Tibial artery (tissue), 4 donors: ENCODE measurements at regions of chr9 and their contacts with region 1.

Region 1: GRCh38 chr9:7489036-7489435 is 310.5 kb downstream of the DMAC1 start:
- DNase-seq: no peak
- H3K4me3 ChIP-seq: no peak overlapping the region
- H3K27ac ChIP-seq: no peak overlapping the region
- H3K4me1 ChIP-seq: no peaks in the 10 kb centered on the region
- H3K27me3 ChIP-seq: no peaks in the 10 kb centered on the region
- CTCF ChIP-seq: no peak

Region 2: DNA sequence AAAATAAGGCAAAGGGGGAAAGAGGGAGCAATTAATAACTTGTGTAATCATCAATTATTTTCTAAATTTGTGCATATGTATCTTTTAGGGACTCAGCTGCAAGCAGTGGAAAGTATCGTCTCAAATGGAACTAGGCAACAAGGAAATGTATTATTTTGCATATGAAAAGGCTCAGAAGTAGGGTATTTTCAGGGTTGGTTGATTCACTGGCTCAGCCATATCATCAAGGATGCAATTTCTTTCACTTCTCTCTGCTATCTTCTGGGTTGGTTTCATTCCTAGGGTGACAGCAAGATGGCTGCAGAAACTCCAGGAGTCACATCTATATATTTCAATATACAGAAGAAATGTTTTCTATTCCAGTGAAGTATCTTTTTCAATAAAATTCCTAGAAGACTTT is 199.3 kb before region 1 on chr9:
- intact Hi-C with region 1: no loop called
- DNase-seq: no peak
- H3K4me3 ChIP-seq: no peak overlapping the region
- H3K27ac ChIP-seq: no peak overlapping the region
- H3K4me1 ChIP-seq: no peaks in the 10 kb centered on the region
- H3K27me3 ChIP-seq: no peaks in the 10 kb centered on the region
- CTCF ChIP-seq: no peak

Region 3: GRCh38 chr9:7300484-7300883 is 188.6 kb before region 1 on chr9:
- intact Hi-C with region 1: no loop called
- DNase-seq: no peak
- H3K4me3 ChIP-seq: no peak overlapping the region
- H3K27ac ChIP-seq: no peak overlapping the region
- H3K4me1 ChIP-seq: peaks cover 0 to 13% (median 0%) of the 10 kb centered on the region in 4 donors
- H3K27me3 ChIP-seq: no peaks in the 10 kb centered on the region
- CTCF ChIP-seq: no peak

Region 4: GRCh38 chr9:7394007-7394774 is 94.8 kb before region 1 on chr9:
- intact Hi-C with region 1: no loop called
- DNase-seq: no peak
- H3K4me3 ChIP-seq: no peak overlapping the region
- H3K27ac ChIP-seq: no peak overlapping the region
- H3K4me1 ChIP-seq: no peaks in the 10 kb centered on the region
- H3K27me3 ChIP-seq: no peaks in the 10 kb centered on the region
- CTCF ChIP-seq: no peak

Region 5: GRCh38 chr9:7523426-7524043 is 34.5 kb after region 1 on chr9:
- intact Hi-C with region 1: no loop called
- DNase-seq: no peak
- H3K4me3 ChIP-seq: no peak overlapping the region
- H3K27ac ChIP-seq: no peak overlapping the region
- H3K4me1 ChIP-seq: peaks cover 0 to 6% (median 0%) of the 10 kb centered on the region in 4 donors
- H3K27me3 ChIP-seq: no peaks in the 10 kb centered on the region
- CTCF ChIP-seq: no peak

Region 6: DNA sequence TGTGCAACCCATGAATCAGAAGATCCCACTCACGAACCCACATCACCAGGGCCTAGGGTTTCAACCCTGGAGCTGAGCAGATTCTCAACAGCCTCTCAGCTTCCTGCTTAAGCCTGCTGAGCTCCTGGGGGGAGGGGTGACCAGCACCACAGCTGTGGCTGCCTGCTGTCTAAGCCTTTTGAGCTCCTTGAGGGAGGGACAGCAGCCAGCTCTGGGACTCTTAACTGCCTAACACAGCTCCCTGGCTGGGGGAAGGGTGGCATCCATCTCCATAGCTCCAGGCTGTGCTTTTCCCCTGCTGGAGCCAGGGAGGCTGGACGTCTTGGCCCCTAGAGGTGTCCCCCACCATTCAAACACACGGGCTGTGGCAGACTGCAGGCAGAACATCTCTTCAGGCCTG is 60.2 kb after region 1 on chr9:
- intact Hi-C with region 1: loop called (anchors 10 kb)
- DNase-seq: peak in 1 of 2 donors; percentile 20
- H3K4me3 ChIP-seq: no peak overlapping the region
- H3K27ac ChIP-seq: no peak overlapping the region
- H3K4me1 ChIP-seq: no peaks in the 10 kb centered on the region
- H3K27me3 ChIP-seq: no peaks in the 10 kb centered on the region
- CTCF ChIP-seq: no peak